ENCODE measurements at regions of chr2 and their contacts with region 1.

Region 1: DNA sequence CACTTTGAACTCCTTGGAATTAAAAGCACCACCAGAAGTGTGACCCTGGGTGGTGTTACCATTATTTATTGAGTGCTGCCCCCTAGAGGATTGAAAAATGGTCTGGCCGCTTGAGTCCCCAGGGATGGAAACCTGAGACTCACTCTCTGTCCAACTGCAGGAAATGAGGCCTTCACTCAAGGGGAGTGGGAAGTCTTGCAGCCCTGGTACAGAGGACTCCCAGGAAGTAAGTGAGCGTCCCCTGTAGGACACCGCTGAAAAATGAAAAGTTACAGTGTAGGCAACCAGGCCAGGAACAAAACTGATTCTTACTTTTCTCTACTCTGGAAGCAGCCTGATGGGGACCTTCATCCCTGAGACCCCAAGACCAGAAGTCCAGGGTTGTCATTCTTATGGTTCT is 2.2 kb upstream of the NRP2 start:
- DNase-seq: peak in 1 of 10 donors; percentile 58
- H3K4me3 ChIP-seq: no peak overlapping the region
- H3K27ac ChIP-seq: no peak overlapping the region
- H3K27me3 ChIP-seq: peaks cover 0 to 38% (median 6%) of the 10 kb centered on the region in 45 donors
- CTCF ChIP-seq: peak; percentile 54 to 83 (median 71)

Region 2: DNA sequence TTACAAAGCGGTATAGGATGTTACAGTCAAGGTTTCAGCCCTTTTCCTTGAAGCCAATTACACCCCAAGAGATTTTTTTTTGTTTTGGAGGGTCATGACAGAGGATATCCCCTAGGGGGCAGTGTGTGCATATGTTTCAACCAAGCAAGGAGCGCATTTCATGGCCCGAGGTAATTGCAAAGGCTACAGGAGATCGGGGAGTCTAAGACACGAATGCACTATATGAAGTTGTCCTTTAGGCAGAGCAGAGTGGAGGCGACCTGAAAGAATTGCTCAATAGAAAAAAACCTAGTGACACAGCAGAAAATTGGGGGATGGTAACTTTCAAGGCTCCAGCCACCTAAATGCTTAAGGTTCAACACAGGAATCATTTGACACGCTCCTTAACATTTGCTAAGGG is 1354.6 kb before region 1 on chr2:
- intact Hi-C with region 1: loop called (anchors 2 to 5 kb)
- DNase-seq: peak in 6 of 10 donors; percentile 18 to 64 (median 46)
- H3K4me3 ChIP-seq: peak overlapping the region in 1 of 59 donors; percentile 9
- H3K27ac ChIP-seq: no peak overlapping the region
- H3K27me3 ChIP-seq: no peaks in the 10 kb centered on the region
- CTCF ChIP-seq: peak; percentile 71 to 99 (median 93)

Region 3: DNA sequence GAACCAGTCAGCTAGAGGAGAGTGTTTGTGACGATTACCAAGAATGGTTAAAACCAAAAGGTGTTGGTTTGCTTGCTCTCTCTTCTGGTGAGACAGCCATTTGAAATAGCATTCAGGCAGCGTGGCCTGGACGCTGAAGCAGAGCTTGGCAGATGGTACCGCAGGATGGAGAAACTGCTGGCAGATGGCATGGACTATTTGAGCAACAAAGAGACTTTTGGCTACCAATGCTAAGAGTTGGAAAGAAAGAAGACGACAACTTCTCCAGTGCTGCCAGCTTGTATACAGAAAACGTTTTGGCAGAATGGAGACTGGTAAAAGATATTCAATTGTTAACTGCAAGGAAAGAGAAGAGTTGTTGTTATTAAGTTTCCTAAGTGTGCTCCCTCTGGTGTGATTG is 819.8 kb before region 1 on chr2:
- intact Hi-C with region 1: loop called in 1 of 2 experiments (anchors 10 kb)
- DNase-seq: peak in 9 of 10 donors; percentile 20 to 73 (median 56)
- H3K4me3 ChIP-seq: peak overlapping the region in 1 of 59 donors; percentile 2
- H3K27ac ChIP-seq: no peak overlapping the region
- H3K27me3 ChIP-seq: no peaks in the 10 kb centered on the region
- CTCF ChIP-seq: peak in 2 of 56 donors; percentile 7 to 14

Region 4: GRCh38 chr2:204871231-204871953 is 808.7 kb before region 1 on chr2:
- intact Hi-C with region 1: loop called (anchors 5 to 10 kb)
- DNase-seq: no peak
- H3K4me3 ChIP-seq: no peak overlapping the region
- H3K27ac ChIP-seq: no peak overlapping the region
- H3K27me3 ChIP-seq: no peaks in the 10 kb centered on the region
- CTCF ChIP-seq: peak; percentile 13 to 80 (median 60)

Region 5: GRCh38 chr2:205714058-205714776 is 34.1 kb after region 1 on chr2:
- intact Hi-C with region 1: no loop called
- DNase-seq: no peak
- H3K4me3 ChIP-seq: no peak overlapping the region
- H3K27ac ChIP-seq: peak overlapping the region in 43 of 59 donors; percentile 2 to 76 (median 48)
- H3K27me3 ChIP-seq: peaks cover 0 to 3% (median 0%) of the 10 kb centered on the region in 45 donors
- CTCF ChIP-seq: no peak

Region 6: GRCh38 chr2:205766779-205767359 is 86.8 kb after region 1 on chr2:
- intact Hi-C with region 1: loop called in 1 of 2 experiments (anchors 10 kb)
- DNase-seq: peak; percentile 46 to 82 (median 61)
- H3K4me3 ChIP-seq: no peak overlapping the region
- H3K27ac ChIP-seq: no peak overlapping the region
- H3K27me3 ChIP-seq: peaks cover 0 to 5% (median 0%) of the 10 kb centered on the region in 45 donors
- CTCF ChIP-seq: peak; percentile 62 to 90 (median 81)

Region 7: GRCh38 chr2:205925373-205926337 is 245.6 kb after region 1 on chr2:
- intact Hi-C with region 1: loop called in 1 of 2 experiments (anchors 10 kb)
- DNase-seq: peak; percentile 44 to 84 (median 58)
- H3K4me3 ChIP-seq: peak overlapping the region in 41 of 59 donors; percentile 4 to 52 (median 28)
- H3K27ac ChIP-seq: no peak overlapping the region
- H3K27me3 ChIP-seq: peaks cover 0 to 35% (median 12%) of the 10 kb centered on the region in 45 donors
- CTCF ChIP-seq: peak; percentile 61 to 98 (median 90)